ENCODE measurements at regions of chr14 and their contacts with region 1.

Region 1: DNA sequence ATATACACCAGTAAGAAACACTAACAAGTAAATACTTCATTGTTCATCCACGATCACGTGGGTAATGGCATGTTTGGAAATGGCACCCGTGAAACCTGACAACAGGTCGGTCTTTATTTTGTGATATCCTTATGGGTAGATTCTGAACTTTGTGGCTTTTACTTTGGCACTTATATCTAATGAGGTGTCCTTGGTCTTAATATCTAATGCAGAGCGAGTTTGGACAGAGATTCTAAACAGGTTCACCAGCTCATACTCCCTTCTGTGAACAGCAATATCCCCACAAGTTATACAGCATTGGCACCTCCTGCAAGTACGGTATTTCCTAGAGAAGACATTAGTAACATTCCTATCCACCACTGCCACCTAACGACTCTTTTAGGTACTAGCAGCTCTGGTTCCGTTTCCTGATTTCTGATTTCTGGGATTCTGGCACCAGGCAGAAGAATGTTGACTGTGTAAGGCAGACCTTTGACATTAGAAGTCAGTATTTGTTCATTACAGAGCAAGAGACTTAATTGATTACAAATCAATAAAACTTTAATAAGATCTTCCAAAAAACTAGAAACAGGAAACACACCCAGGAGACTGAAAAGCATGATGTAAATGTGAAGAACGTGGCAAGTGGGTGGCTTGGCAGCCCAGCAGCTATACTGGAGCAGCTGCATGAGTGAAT is 2.4 kb downstream of the ANG start:
- DNase-seq: peak in 10 of 14 experiments; percentile 7 to 85 (median 30)
- ATAC-seq: peak; percentile 99
- H3K4me3 ChIP-seq: no peak overlapping the region
- H3K4me3 Mint-ChIP-seq: no peak overlapping the region
- H3K27ac ChIP-seq: no peak overlapping the region
- H3K27ac Mint-ChIP-seq: no peak overlapping the region
- H3K4me1 ChIP-seq: no peaks in the 10 kb centered on the region
- H3K4me1 Mint-ChIP-seq: peaks cover 6% of the 10 kb centered on the region
- H3K27me3 ChIP-seq: no peaks in the 10 kb centered on the region
- H3K27me3 Mint-ChIP-seq: no peaks in the 10 kb centered on the region
- CTCF ChIP-seq: peak; percentile 93

Region 2: DNA sequence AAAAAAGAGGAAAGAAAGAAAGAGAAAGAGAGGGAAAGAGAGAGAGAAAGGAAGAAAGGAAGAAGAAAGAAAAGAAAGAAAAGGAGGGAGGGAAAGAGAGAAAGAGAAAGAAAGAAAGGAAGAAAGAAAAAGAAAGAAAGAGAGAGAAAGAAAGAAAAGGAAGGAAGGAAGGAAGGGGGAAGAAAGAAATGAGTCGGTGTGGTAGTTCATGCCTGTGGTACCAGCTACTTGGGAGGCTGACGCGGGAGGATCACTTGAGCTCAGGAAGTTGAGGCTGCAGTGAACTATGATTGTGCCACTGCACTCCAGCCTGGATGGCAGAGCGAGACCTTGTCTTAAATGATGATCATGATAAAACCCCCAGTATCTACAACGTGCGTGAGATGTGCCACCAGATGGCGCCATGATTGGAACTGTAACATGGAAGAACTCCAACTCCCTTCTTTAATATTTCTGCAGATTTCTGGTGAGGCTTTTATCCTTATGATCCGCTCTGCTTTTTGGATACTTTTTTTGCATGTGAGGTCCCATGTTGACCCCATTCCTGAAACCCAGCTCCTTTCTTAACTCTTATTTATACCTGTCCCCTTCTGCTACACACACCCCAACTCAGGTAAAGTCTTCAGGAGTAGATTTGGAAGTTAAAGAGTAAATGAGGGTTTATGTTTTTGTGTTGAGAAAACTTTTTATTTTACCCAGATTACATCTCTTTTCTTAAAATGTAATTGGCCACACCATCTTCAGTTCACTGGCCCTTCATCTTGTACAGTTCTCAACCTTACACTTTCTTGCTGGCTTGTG is 160.0 kb before region 1 on chr14:
- CTCF ChIA-PET with region 1: interaction called, 5 read pairs
- POLR2A ChIA-PET with region 1: no interaction called
- intact Hi-C with region 1: loop called (anchors 1 to 2 kb)
- DNase-seq: peak; percentile 51 to 86 (median 64)
- ATAC-seq: peak; percentile 67
- H3K4me3 ChIP-seq: no peak overlapping the region
- H3K4me3 Mint-ChIP-seq: no peak overlapping the region
- H3K27ac ChIP-seq: no peak overlapping the region
- H3K27ac Mint-ChIP-seq: no peak overlapping the region
- H3K4me1 ChIP-seq: peaks cover 3% of the 10 kb centered on the region
- H3K4me1 Mint-ChIP-seq: peaks cover 7% of the 10 kb centered on the region
- H3K27me3 ChIP-seq: no peaks in the 10 kb centered on the region
- H3K27me3 Mint-ChIP-seq: peaks cover 5% of the 10 kb centered on the region
- CTCF ChIP-seq: peak; percentile 70

Region 3: GRCh38 chr14:20652996-20653975 is 37.7 kb before region 1 on chr14:
- CTCF ChIA-PET with region 1: interaction called, 27 read pairs
- POLR2A ChIA-PET with region 1: no interaction called
- intact Hi-C with region 1: no loop called
- DNase-seq: peak in 7 of 14 experiments; percentile 27 to 68 (median 36)
- ATAC-seq: peak; percentile 51
- H3K4me3 ChIP-seq: peak overlapping the region; percentile 3
- H3K4me3 Mint-ChIP-seq: peak overlapping the region; percentile 52
- H3K27ac ChIP-seq: no peak overlapping the region
- H3K27ac Mint-ChIP-seq: peak overlapping the region; percentile 5
- H3K4me1 ChIP-seq: peaks cover 22% of the 10 kb centered on the region
- H3K4me1 Mint-ChIP-seq: peaks cover 27% of the 10 kb centered on the region
- H3K27me3 ChIP-seq: peaks cover 36 to 58% of the 10 kb centered on the region in 2 experiments
- H3K27me3 Mint-ChIP-seq: peaks cover 75% of the 10 kb centered on the region
- CTCF ChIP-seq: no peak

Region 4: GRCh38 chr14:20662968-20663732 is 27.8 kb before region 1 on chr14:
- CTCF ChIA-PET with region 1: interaction called, 27 read pairs
- POLR2A ChIA-PET with region 1: interaction called, 3 read pairs
- intact Hi-C with region 1: loop called (anchors 1 kb)
- DNase-seq: peak; percentile 65 to 92 (median 74)
- ATAC-seq: peak; percentile 89
- H3K4me3 ChIP-seq: peak overlapping the region; percentile 54
- H3K4me3 Mint-ChIP-seq: peak overlapping the region; percentile 89
- H3K27ac ChIP-seq: no peak overlapping the region
- H3K27ac Mint-ChIP-seq: peak overlapping the region; percentile 85
- H3K4me1 ChIP-seq: peaks cover 22% of the 10 kb centered on the region
- H3K4me1 Mint-ChIP-seq: peaks cover 35% of the 10 kb centered on the region
- H3K27me3 ChIP-seq: no peaks in the 10 kb centered on the region
- H3K27me3 Mint-ChIP-seq: peaks cover 18% of the 10 kb centered on the region
- CTCF ChIP-seq: peak; percentile 72